ENCODE measurements at regions of chr14 and their contacts with region 1.

Region 1: DNA sequence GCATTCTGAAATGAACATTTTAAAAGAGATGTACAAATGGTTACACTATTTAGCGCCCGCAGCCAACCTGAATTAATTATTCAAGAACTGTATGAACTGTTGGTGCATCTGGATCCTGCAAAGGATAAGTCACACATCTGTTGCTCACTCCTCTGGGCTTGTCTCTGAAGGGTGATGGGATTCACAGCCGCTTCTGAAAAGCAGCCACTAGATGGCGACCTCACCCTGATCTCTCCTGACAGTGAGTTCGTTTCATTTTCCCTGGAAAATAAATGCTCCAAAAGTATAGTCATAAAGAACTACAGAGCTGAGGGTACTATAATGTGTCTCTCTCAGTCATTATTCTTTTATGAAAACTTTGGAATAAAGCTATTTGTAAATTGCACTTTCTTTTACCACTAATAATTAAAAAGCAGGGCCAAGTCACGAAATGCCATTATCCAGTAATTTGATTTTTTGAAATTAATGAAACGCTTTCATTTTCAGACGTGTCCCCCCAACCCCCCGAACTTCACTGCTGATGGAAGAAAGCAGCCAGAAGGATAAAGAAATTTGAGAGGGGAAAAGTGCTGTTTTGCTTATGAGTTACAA is 789.6 kb downstream of the NRXN3 start:
- DNase-seq: peak; percentile 65
- H3K4me3 ChIP-seq: peak overlapping the region; percentile 24 to 43; a peak in 3 of 4 replicates
- H3K27ac ChIP-seq: peak overlapping the region in 1 of 2 experiments; percentile 18; a peak in 2 of 4 replicates
- H3K4me1 ChIP-seq: no peaks in the 10 kb centered on the region; a peak in 1 of 4 replicates
- H3K27me3 ChIP-seq: no peaks in the 10 kb centered on the region
- CTCF ChIP-seq: peak; percentile 95
- EP300 ChIP-seq: no peak
- RAD21 ChIP-seq: peak; percentile 80

Region 2: DNA sequence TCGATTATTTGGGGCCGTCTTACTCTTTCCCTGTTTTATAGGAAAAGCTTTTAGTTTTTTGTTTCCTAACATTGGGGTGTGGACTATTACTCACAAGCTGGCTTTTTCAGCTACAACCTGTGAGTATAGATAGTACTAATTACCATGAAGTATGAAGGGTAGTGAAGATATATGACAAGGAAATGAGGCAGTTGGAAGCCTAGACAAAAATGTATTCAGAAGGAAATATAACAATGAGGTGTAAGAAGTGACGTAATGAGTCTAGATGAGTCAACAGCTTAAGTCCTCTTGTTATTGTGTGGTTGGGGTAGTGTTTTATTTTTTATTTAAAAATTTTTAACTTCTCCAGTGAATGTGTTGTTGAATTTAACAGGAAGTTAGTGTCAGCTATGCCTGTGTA is 14.9 kb after region 1 on chr14:
- CTCF ChIA-PET with region 1: interaction called, 21 read pairs
- POLR2A ChIA-PET with region 1: no interaction called
- DNase-seq: no peak
- H3K4me3 ChIP-seq: no peak overlapping the region
- H3K27ac ChIP-seq: no peak overlapping the region
- H3K4me1 ChIP-seq: no peaks in the 10 kb centered on the region; a peak in 2 of 4 replicates
- H3K27me3 ChIP-seq: no peaks in the 10 kb centered on the region
- CTCF ChIP-seq: no peak
- EP300 ChIP-seq: no peak
- RAD21 ChIP-seq: no peak